Activated CD8-positive, alpha-beta memory T cell treated with anti-CD3 and anti-CD28 coated beads, Interleukin-2, amount 10 ng/mL, durations not matched to agents 7 days and 5 days (primary cell): ENCODE measurements at regions of chr3 and their contacts with region 1.

Region 1: GRCh38 chr3:4350789-4351163 is 47.6 kb downstream of the SETMAR start:
- DNase-seq: peak; percentile 77
- ATAC-seq: peak; percentile 80
- H3K4me3 Mint-ChIP-seq: peak overlapping the region; percentile 71
- H3K27ac Mint-ChIP-seq: peak overlapping the region; percentile 71
- H3K4me1 Mint-ChIP-seq: peaks cover 26% of the 10 kb centered on the region
- H3K27me3 Mint-ChIP-seq: no peaks in the 10 kb centered on the region

Region 2: DNA sequence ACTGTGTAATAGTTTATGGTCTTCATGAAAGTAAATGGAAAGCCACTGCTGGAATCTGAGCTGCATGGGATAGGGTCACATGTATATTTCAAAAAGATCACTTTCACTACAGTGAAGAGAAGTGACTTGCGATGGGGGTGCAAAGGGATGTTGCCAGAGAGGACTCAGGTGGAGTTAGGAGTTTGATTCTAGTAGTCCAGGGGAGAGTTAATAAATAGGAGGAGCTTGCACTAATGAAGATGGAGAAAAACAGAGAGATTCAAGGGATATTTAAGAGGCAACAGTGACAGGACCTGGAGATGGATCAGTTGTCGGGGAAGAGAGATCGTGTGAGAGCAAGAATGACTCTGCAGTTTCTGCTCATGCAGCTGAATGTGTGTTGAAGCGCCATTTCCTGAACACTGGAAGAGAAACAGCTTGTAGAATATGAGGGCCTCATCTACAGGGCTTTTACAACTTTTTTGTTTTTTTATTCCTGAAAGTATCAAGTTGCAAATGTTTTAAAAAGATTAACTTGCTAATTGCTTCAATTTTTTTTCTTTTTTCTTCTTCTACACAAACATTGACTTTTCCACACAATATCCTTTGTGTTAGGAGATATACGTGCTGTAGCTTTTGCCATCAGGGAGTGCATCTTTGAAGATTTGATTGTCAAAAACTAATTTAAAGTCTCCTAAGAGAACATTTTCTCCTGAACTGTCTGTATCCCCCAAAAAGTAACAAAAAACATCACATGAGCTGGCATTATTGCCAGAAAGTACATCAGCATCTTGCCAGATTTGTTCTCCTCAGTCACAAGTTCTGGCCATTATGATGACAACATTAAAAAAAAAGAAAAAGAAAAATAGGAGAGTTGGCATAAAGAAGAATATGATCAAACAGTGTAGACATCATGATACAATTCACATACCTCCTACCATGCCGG is 10.1 kb before region 1 on chr3:
- CTCF ChIA-PET with region 1: interaction called, 17 read pairs
- DNase-seq: no peak
- ATAC-seq: no peak
- H3K4me3 Mint-ChIP-seq: no peak overlapping the region
- H3K27ac Mint-ChIP-seq: no peak overlapping the region
- H3K4me1 Mint-ChIP-seq: peaks cover 6% of the 10 kb centered on the region
- H3K27me3 Mint-ChIP-seq: no peaks in the 10 kb centered on the region

Region 3: GRCh38 chr3:4474683-4475490 is 124.1 kb after region 1 on chr3:
- CTCF ChIA-PET with region 1: interaction called, 18 read pairs
- DNase-seq: peak; percentile 77
- ATAC-seq: peak; percentile 91
- H3K4me3 Mint-ChIP-seq: peak overlapping the region; percentile 45
- H3K27ac Mint-ChIP-seq: peak overlapping the region; percentile 85
- H3K4me1 Mint-ChIP-seq: peaks cover 23% of the 10 kb centered on the region
- H3K27me3 Mint-ChIP-seq: peaks cover 20% of the 10 kb centered on the region

Region 4: GRCh38 chr3:4517643-4518311 is 167.0 kb after region 1 on chr3:
- CTCF ChIA-PET with region 1: interaction called, 24 read pairs
- DNase-seq: no peak
- ATAC-seq: peak; percentile 32
- H3K4me3 Mint-ChIP-seq: no peak overlapping the region
- H3K27ac Mint-ChIP-seq: peak overlapping the region; percentile 66
- H3K4me1 Mint-ChIP-seq: peaks cover 32% of the 10 kb centered on the region
- H3K27me3 Mint-ChIP-seq: no peaks in the 10 kb centered on the region

Region 5: GRCh38 chr3:4633078-4634004 is 282.6 kb after region 1 on chr3:
- CTCF ChIA-PET with region 1: interaction called, 49 read pairs
- DNase-seq: no peak
- ATAC-seq: peak; percentile 76
- H3K4me3 Mint-ChIP-seq: no peak overlapping the region
- H3K27ac Mint-ChIP-seq: peak overlapping the region; percentile 55
- H3K4me1 Mint-ChIP-seq: peaks cover 7% of the 10 kb centered on the region
- H3K27me3 Mint-ChIP-seq: no peaks in the 10 kb centered on the region